ENCODE measurements at regions of chr11 and their contacts with region 1.

Region 1: GRCh38 chr11:113994077-113994954 is 19.4 kb downstream of the HTR3A start:
- DNase-seq: peak; percentile 34
- H3K4me3 Mint-ChIP-seq: no peak overlapping the region
- H3K27ac Mint-ChIP-seq: no peak overlapping the region
- H3K4me1 Mint-ChIP-seq: no peaks in the 10 kb centered on the region
- H3K27me3 Mint-ChIP-seq: peaks cover 21% of the 10 kb centered on the region

Region 2: DNA sequence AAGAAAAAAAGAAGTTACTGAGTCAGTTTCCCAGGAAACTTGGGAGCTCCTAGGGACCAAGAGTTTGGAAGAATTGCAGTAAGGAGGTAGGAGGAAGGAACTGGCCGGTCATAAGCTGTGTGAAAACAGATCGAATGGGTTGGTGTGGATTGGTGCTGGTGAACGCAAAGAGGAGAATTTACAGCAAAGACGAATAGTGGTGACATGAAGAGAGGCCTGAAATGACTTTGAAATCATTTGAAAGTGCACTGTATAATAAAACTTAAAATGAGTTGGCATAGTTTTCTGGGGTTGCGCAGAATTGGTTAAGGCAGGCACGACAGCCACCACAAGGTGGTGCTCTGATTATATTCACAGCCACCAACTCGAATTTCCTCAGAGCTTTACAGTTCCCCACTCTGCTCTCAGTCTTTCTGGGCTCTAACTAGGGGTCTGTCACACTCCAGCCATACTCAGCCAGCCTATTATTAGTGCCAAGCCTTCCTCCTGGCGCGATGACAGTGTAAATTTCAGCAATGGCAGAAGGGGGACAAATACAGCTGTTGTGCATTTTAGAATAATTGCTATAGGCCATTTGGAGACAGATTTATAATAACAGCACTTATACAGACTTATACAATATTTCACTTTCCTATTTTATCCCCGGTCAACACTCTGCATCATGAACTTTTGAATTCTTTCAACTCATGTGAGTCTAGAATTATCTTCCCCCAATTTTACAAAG is 98.0 kb before region 1 on chr11:
- CTCF ChIA-PET with region 1: no interaction called
- POLR2A ChIA-PET with region 1: no interaction called
- intact Hi-C with region 1: loop called (anchors 2 kb)
- DNase-seq: peak; percentile 50
- H3K4me3 Mint-ChIP-seq: no peak overlapping the region
- H3K27ac Mint-ChIP-seq: no peak overlapping the region
- H3K4me1 Mint-ChIP-seq: no peaks in the 10 kb centered on the region
- H3K27me3 Mint-ChIP-seq: no peaks in the 10 kb centered on the region

Region 3: GRCh38 chr11:113960702-113961330 is 33.5 kb before region 1 on chr11:
- CTCF ChIA-PET with region 1: no interaction called
- POLR2A ChIA-PET with region 1: no interaction called
- intact Hi-C with region 1: no loop called
- DNase-seq: no peak
- H3K4me3 Mint-ChIP-seq: no peak overlapping the region
- H3K27ac Mint-ChIP-seq: no peak overlapping the region
- H3K4me1 Mint-ChIP-seq: no peaks in the 10 kb centered on the region
- H3K27me3 Mint-ChIP-seq: peaks cover 6% of the 10 kb centered on the region

Region 4: DNA sequence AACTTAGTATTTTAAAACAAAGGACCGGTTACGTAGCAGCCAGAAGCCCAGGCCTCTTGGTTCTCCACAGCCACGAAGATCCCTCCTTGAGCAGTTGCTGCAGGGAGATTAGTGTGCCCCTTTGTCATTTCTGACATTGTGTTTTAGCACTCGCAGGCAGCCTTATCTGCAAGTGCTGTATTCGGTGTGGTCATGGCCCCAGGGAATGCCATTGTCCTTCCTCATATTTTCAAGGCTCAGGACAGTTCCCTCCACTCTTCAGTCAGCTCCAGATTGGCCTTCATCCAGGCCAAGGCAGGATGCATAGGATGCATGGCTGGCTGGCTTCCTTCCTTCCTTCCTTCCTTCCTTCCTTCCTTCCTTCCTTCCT is 153.7 kb after region 1 on chr11:
- CTCF ChIA-PET with region 1: no interaction called
- POLR2A ChIA-PET with region 1: no interaction called
- intact Hi-C with region 1: no loop called
- DNase-seq: no peak
- H3K4me3 Mint-ChIP-seq: no peak overlapping the region
- H3K27ac Mint-ChIP-seq: no peak overlapping the region
- H3K4me1 Mint-ChIP-seq: peaks cover 31% of the 10 kb centered on the region
- H3K27me3 Mint-ChIP-seq: no peaks in the 10 kb centered on the region

Region 5: DNA sequence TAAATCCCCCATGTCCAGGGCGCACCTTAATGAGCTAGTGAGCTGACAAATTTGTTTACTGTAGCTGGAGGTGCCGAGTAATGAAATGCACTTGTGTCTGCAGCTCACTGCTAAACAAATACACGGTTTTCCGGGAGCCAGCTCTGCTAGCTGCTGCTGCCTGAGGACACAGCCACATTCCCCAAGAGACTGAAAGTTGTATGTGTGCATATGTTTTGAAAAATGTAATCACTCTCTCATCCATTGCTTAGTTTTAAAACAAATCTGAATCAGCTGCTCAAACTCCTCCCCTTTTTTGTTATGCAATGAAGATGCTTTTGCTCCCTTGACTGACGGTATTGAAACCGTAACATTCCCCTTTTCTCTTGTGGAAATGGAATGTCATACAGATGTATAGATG is 239.4 kb after region 1 on chr11:
- CTCF ChIA-PET with region 1: no interaction called
- POLR2A ChIA-PET with region 1: no interaction called
- intact Hi-C with region 1: no loop called
- DNase-seq: no peak
- H3K4me3 Mint-ChIP-seq: no peak overlapping the region
- H3K27ac Mint-ChIP-seq: no peak overlapping the region
- H3K4me1 Mint-ChIP-seq: no peaks in the 10 kb centered on the region
- H3K27me3 Mint-ChIP-seq: no peaks in the 10 kb centered on the region